Body of pancreas (tissue), 4 donors: ENCODE measurements at regions of chr3 and their contacts with region 1.

Region 1: GRCh38 chr3:113291572-113291971 is 80.2 kb downstream of the BOC start:
- DNase-seq: no peak
- ATAC-seq: no peak
- H3K4me3 ChIP-seq: no peak overlapping the region
- H3K27ac ChIP-seq: no peak overlapping the region
- H3K4me1 ChIP-seq: peaks cover 6% of the 10 kb centered on the region
- H3K27me3 ChIP-seq: no peaks in the 10 kb centered on the region
- CTCF ChIP-seq: no peak
- POLR2A ChIP-seq: no peak

Region 2: DNA sequence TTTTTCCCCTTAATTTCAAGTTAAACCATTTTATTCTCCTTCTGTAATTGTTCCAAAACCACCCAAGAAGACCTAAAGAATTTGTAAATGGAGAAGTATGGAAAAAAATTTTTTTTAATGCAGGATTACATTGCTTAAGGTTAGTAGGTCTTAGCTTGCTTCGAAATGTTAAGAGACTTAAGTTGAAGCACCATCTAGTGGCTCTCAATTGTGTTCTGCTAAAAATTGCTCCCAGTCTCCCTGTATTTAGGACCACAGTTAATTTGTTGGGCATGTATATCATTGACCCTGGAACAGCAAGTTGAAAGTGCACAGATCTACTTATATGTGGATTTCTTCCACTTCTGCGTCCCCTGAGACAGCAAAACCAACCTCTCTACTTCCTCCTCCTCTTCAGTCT is 477.3 kb before region 1 on chr3:
- intact Hi-C with region 1: no loop called
- DNase-seq: no peak
- ATAC-seq: no peak
- H3K4me3 ChIP-seq: no peak overlapping the region
- H3K27ac ChIP-seq: peak overlapping the region in 1 of 4 donors; percentile 47
- H3K4me1 ChIP-seq: no peaks in the 10 kb centered on the region
- H3K27me3 ChIP-seq: no peaks in the 10 kb centered on the region
- CTCF ChIP-seq: peak in 3 of 7 experiments; percentile 11 to 32 (median 17)
- POLR2A ChIP-seq: no peak

Region 3: DNA sequence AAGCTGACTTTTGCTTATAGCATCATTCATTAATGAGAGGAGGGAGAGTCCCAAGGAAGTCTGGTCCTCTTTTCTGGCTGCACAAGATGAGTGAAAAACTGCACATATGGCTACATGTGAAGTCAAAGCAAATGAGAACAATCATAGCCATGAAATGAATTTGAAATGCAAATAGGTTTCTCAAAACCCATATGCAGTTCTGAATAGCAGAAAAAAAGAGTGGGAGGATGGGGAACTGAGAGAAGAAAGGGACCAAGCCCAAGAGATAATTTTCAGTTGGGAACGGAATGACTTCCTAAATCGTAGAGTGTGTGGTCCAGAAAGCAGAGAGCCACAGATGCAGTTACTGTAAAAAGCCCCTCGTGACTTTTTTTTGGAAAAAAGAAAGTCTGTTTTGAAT is 234.5 kb before region 1 on chr3:
- intact Hi-C with region 1: loop called (anchors 5 kb)
- DNase-seq: no peak
- ATAC-seq: no peak
- H3K4me3 ChIP-seq: no peak overlapping the region
- H3K27ac ChIP-seq: no peak overlapping the region
- H3K4me1 ChIP-seq: no peaks in the 10 kb centered on the region
- H3K27me3 ChIP-seq: no peaks in the 10 kb centered on the region
- CTCF ChIP-seq: no peak
- POLR2A ChIP-seq: no peak

Region 4: DNA sequence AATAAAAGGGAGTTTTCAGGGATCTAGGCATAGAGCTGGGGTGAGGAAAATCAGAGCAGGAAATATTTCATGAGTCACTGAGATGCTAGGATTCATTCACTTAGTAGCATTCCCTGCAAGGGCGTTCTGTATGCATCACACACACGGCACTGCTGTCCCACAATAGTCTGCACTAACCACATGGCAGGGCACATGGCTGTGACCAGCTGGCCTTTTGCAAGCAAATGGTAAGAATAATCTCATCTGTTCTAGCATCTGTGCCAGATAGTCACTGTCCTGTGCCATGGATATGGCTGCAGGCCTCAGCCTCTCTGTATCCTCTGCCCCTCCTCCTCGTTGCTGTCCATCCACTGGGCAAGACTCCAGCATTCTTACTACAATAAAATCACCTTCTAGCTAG is 42.5 kb before region 1 on chr3:
- intact Hi-C with region 1: no loop called
- DNase-seq: peak in 1 of 4 donors; percentile 24
- ATAC-seq: peak; percentile 45
- H3K4me3 ChIP-seq: no peak overlapping the region
- H3K27ac ChIP-seq: no peak overlapping the region
- H3K4me1 ChIP-seq: no peaks in the 10 kb centered on the region
- H3K27me3 ChIP-seq: no peaks in the 10 kb centered on the region
- CTCF ChIP-seq: no peak
- POLR2A ChIP-seq: no peak